PC-9 (cell line): ENCODE measurements at regions of chr6 and their contacts with region 1.

Region 1: GRCh38 chr6:52815167-52816092 is 11.8 kb upstream of the GSTA1 start:
- DNase-seq: peak; percentile 51 to 54
- H3K4me3 ChIP-seq: no peak overlapping the region
- H3K27ac ChIP-seq: no peak overlapping the region
- H3K4me1 ChIP-seq: no peaks in the 10 kb centered on the region
- H3K27me3 ChIP-seq: no peaks in the 10 kb centered on the region
- CTCF ChIP-seq: peak; percentile 75

Region 2: DNA sequence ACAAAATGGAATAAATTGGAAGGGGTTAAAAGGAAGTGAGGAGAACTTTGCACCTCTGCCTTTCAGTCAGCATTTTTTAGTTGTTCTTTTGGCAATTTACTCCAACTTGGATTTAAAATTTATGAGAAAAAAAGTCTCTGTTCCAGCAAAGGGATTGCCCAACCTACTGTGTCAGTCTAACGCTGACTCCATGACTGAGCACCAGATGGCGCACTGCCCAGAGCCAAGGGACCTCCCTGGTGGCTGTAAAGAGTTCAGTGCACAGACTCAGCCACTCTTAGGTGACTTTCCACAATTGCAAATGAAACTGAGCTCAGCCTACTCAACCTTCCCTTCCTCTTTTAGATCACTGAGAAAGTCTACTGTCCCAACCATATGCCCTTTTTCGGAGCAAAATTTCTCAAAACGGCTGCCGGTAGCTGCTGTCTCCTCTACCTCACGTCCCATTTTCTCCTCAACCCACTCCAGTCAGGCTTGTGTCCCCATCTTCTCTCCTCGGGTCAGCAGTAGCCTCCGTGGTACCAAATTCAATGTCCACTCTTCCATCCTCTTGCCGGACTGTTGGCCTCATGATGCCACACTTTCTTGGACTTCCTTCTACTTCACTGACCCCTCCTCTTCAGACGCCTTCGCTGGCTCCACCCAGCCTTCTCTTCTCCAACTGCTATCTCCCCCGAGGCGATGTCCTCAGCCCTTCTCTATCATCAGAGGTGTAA is 90.9 kb before region 1 on chr6:
- CTCF ChIA-PET with region 1: no interaction called
- POLR2A ChIA-PET with region 1: no interaction called
- intact Hi-C with region 1: loop called (anchors 10 kb)
- DNase-seq: peak; percentile 39 to 40
- H3K4me3 ChIP-seq: no peak overlapping the region
- H3K27ac ChIP-seq: peak overlapping the region; percentile 89
- H3K4me1 ChIP-seq: peaks cover 34% of the 10 kb centered on the region
- H3K27me3 ChIP-seq: no peaks in the 10 kb centered on the region
- CTCF ChIP-seq: peak; percentile 70